ENCODE measurements at regions of chr3 and their contacts with region 1.

Region 1: GRCh38 chr3:150913133-150913922 is 8.1 kb upstream of the MINDY4B start:
- DNase-seq: no peak
- H3K4me3 ChIP-seq: no peak overlapping the region
- H3K4me1 ChIP-seq: no peaks in the 10 kb centered on the region
- H3K27me3 ChIP-seq: peaks cover 32% of the 10 kb centered on the region

Region 2: DNA sequence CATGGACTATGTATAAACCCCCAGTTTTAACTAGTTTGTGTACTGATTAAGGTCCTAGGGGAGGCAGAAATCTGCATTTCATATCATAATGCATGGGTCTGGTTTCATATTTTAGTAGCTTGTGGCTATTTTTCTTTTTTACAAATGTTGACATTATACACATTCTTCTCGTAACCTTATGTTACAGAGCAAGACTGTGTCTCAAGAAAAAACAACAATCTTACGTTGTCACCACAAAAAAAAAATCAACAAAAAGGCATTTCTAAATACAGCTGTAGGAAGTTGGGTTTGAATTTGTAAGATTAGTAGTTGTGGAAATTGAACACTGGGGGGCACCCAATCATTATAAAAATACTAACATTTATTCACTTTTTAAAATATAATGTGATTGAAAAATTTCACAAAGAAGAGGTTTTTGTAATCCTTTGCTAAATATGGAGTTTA is 385.0 kb before region 1 on chr3:
- in situ Hi-C with region 1: no loop called
- DNase-seq: no peak
- H3K4me3 ChIP-seq: no peak overlapping the region
- H3K4me1 ChIP-seq: peaks cover 7% of the 10 kb centered on the region
- H3K27me3 ChIP-seq: no peaks in the 10 kb centered on the region

Region 3: DNA sequence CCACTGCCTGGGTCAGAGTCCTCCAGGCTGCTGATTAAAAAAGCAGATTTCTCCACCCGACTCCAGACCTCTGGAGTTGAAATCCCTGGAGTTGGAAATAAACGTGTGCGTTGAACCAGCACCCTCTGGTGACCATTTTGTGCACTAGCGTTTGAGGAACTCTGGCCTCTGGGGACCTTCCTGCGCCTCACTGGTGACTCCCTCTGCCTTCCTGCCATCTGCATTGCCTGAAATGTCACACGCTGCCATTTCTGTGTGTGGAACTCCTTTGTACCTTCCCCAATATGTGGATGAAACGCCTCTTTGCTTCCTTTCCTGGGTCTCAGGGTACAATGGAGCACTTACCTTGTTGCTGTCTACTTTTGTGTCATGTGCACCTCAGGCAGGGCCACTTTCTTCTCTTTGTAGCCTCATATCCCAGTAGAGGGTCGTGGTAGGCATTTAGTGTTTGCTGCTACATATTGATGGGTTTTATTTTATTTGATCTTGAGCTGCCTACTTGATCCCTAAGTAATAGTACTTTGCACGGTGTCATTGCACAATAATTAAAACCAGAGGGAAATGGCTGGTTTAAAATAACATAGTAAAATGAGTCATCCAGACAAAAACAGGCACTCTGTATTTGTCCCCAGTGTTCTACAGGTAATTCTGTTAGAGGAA is 232.9 kb after region 1 on chr3:
- in situ Hi-C with region 1: loop called (anchors 25 kb)
- DNase-seq: peak; percentile 75 to 77
- H3K4me3 ChIP-seq: no peak overlapping the region
- H3K4me1 ChIP-seq: peaks cover 8% of the 10 kb centered on the region
- H3K27me3 ChIP-seq: no peaks in the 10 kb centered on the region

Measured in HAP-1 (cell line).